Activated CD4-positive, alpha-beta memory T cell treated with anti-CD3 and anti-CD28 coated beads, Interleukin-2, amount 10 ng/mL, durations not matched to agents 7 days and 5 days (primary cell): ENCODE measurements at regions of chr5 and their contacts with region 1.

Region 1: DNA sequence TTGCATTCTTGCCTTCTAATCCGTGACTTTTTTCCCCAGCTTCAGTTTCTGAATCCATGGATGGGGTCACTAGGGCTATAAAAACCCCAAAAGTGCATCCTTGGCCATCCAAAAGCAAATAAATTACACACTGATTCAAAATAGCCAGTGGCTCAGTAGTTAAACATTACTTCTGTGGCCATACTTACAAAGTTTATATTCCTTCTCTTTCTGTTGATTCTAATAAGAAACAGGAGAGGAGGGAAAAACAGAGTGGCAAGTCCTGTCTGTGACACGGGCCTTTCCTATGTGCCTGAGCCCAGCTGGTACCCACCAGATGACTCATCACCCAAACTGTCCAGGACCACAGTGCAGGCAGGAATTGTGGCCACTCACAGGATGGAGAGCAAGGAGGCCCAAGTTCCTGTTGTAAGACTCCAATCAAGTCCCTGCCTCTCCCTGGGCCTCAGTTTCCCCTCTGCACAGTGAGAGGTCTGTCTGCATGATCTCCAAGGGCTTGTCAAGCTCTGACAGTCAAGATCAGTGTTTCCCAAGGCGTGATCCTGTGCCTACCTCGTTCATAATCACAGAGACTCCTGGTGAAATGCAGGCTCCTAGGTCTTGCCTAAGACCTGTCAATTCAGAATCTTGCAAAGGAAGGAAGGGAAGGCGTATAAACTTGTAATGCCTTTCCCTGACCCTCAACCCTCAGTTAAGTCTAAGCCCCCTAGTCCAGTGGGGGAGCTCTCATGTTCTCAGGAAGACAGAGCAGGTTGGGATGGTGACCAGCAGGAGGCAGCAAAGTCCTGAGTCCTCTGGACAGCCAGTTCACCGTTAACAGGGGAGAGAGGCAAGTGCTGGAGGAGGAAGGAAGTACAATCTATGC is 29.5 kb downstream of the TNIP1 start:
- DNase-seq: peak; percentile 73
- H3K4me3 Mint-ChIP-seq: no peak overlapping the region
- H3K27ac Mint-ChIP-seq: peak overlapping the region; percentile 26
- H3K4me1 Mint-ChIP-seq: peaks cover 11% of the 10 kb centered on the region
- H3K27me3 Mint-ChIP-seq: no peaks in the 10 kb centered on the region

Region 2: GRCh38 chr5:150829744-150830143 is 221.6 kb before region 1 on chr5:
- CTCF ChIA-PET with region 1: no interaction called
- POLR2A ChIA-PET with region 1: no interaction called
- DNase-seq: no peak
- H3K4me3 Mint-ChIP-seq: no peak overlapping the region
- H3K27ac Mint-ChIP-seq: no peak overlapping the region
- H3K4me1 Mint-ChIP-seq: no peaks in the 10 kb centered on the region
- H3K27me3 Mint-ChIP-seq: peaks cover 2% of the 10 kb centered on the region

Region 3: DNA sequence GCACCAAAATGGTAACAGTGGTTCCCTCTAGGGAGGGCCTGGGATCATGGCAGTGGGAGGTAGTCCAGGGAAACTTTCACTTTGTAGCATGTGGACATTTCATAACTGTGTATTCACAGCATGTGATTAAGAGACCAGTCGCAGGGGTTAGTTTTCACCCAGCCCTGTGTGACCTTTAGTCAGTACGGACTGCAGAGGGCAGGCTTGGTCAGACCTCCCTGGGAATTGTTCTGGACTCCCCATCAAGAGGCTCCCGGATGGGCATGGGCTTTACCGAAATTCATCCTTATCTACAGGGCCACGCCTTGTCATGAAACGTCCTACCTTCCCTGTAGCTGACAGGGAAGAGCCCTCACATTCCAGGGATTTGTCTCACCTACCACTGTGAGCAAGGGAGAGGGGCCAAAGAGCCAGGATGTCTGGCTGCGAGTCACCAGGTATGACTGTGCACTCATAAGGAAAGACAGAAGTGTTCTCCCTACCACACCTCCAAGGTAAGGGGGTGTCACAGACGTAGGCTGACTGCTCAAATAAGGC is 11.0 kb before region 1 on chr5:
- CTCF ChIA-PET with region 1: interaction called, 16 read pairs
- POLR2A ChIA-PET with region 1: no interaction called
- DNase-seq: no peak
- H3K4me3 Mint-ChIP-seq: no peak overlapping the region
- H3K27ac Mint-ChIP-seq: no peak overlapping the region
- H3K4me1 Mint-ChIP-seq: peaks cover 10% of the 10 kb centered on the region
- H3K27me3 Mint-ChIP-seq: no peaks in the 10 kb centered on the region

Region 4: DNA sequence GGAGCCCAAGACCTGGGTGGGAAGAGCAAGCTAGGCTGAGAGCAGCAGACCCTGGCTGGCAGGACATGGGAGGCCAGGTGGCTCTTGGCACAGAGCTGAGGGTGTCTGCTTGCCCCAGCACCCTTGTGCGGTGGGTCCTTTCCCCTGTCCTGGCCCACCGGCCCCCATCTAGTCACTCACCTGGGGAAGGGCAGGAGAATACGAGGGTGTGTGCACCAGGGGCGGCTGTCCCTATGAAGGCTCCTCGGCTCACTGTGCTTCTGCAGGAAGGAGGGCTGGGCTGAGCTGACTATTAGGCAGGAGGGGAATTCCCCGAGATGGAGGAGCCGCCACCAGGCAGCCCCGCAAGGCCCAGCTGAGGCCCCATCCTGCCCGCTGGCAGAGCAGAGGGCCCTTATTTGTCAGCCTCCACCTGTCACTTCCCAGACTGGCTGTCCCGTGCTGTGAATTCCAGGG is 35.6 kb after region 1 on chr5:
- CTCF ChIA-PET with region 1: interaction called, 25 read pairs
- POLR2A ChIA-PET with region 1: interaction called, 5 read pairs
- DNase-seq: peak; percentile 74
- H3K4me3 Mint-ChIP-seq: peak overlapping the region; percentile 75
- H3K27ac Mint-ChIP-seq: peak overlapping the region; percentile 58
- H3K4me1 Mint-ChIP-seq: peaks cover 60% of the 10 kb centered on the region
- H3K27me3 Mint-ChIP-seq: peaks cover 5% of the 10 kb centered on the region

Region 5: GRCh38 chr5:151150471-151151262 is 99.4 kb after region 1 on chr5:
- CTCF ChIA-PET with region 1: interaction called, 15 read pairs
- POLR2A ChIA-PET with region 1: no interaction called
- DNase-seq: peak; percentile 83
- H3K4me3 Mint-ChIP-seq: peak overlapping the region; percentile 50
- H3K27ac Mint-ChIP-seq: peak overlapping the region; percentile 96
- H3K4me1 Mint-ChIP-seq: peaks cover 95% of the 10 kb centered on the region
- H3K27me3 Mint-ChIP-seq: no peaks in the 10 kb centered on the region